Naive thymus-derived CD8-positive, alpha-beta T cell (primary cell): ENCODE measurements at regions of chr7 and their contacts with region 1.

Region 1: DNA sequence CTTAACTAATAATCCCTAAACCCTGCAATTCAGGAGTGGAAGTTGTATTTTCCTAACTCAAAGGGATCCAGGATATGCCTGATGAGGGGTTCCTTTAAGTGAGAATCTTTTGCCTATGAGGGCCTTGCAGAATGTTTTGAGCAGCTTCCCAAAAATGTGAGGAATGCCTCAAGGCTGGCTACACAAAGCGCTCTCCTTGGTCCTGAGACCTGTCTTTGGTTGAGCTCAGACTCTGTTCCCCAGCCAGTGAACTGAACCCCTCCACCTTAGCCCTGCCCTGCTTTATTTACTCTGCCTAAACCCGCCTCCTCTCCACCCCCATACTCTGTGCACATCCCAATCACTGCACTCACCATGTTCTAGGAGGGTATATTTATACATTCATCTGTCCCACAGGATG is 108.6 kb downstream of the NRCAM start:
- DNase-seq: no peak
- ATAC-seq: no peak
- H3K4me3 Mint-ChIP-seq: no peak overlapping the region
- H3K27ac Mint-ChIP-seq: no peak overlapping the region
- H3K4me1 Mint-ChIP-seq: peaks cover 0 to 18% (median 6%) of the 10 kb centered on the region in 4 donors
- H3K27me3 Mint-ChIP-seq: peaks cover 0 to 4% (median 0%) of the 10 kb centered on the region in 5 donors

Region 2: DNA sequence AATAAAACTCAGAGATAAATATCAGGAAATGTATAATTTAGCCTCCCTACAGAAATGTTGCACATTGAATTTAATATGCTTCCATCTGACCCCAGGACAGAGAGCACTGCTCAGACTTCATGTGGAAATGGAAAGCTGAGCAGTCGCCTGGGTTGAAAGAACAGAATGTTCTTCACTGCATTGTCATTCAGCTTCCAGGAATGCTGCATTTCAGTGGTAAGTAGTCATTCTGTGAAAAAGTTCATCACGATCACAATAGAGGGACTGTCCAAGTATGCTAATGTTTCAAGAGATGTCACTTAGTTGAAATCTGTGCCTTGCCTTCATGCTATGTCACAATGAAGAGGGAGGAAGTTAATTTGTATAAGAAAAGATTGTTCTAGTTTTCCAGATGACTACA is 38.7 kb before region 1 on chr7:
- POLR2A ChIA-PET with region 1: interaction called, 11 read pairs
- DNase-seq: no peak
- ATAC-seq: no peak
- H3K4me3 Mint-ChIP-seq: no peak overlapping the region
- H3K27ac Mint-ChIP-seq: no peak overlapping the region
- H3K4me1 Mint-ChIP-seq: peaks cover 3 to 15% (median 12%) of the 10 kb centered on the region in 4 donors
- H3K27me3 Mint-ChIP-seq: no peaks in the 10 kb centered on the region

Region 3: GRCh38 chr7:108368466-108368865 is 20.9 kb after region 1 on chr7:
- POLR2A ChIA-PET with region 1: no interaction called
- DNase-seq: no peak
- ATAC-seq: no peak
- H3K4me3 Mint-ChIP-seq: no peak overlapping the region
- H3K27ac Mint-ChIP-seq: peak overlapping the region in 1 of 10 donors; percentile 1
- H3K4me1 Mint-ChIP-seq: peaks cover 3 to 29% (median 13%) of the 10 kb centered on the region in 4 donors
- H3K27me3 Mint-ChIP-seq: peaks cover 0 to 6% (median 0%) of the 10 kb centered on the region in 5 donors